Posterior vena cava (tissue), 2 donors: ENCODE measurements at regions of chr5 and their contacts with region 1.

Region 1: DNA sequence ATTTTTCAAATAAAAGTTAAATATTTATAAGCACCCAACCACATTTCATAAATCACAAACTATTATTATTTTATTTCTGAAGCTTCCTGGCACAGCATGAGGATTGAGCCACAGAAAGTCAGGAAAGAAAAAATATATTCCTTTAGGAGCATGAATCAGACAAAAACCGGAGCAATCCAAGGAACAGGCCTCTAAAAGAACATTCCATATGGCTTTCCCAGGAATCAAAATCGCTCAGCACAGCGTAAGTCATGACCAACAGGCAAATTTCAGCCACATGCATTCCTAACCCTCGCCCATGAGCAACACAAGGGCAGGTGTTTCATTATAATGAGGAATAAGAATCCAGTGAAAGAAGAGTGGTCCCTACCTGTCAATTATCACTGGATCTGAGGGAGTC is 26.7 kb downstream of the EBF1 start:
- DNase-seq: no peak

Region 2: DNA sequence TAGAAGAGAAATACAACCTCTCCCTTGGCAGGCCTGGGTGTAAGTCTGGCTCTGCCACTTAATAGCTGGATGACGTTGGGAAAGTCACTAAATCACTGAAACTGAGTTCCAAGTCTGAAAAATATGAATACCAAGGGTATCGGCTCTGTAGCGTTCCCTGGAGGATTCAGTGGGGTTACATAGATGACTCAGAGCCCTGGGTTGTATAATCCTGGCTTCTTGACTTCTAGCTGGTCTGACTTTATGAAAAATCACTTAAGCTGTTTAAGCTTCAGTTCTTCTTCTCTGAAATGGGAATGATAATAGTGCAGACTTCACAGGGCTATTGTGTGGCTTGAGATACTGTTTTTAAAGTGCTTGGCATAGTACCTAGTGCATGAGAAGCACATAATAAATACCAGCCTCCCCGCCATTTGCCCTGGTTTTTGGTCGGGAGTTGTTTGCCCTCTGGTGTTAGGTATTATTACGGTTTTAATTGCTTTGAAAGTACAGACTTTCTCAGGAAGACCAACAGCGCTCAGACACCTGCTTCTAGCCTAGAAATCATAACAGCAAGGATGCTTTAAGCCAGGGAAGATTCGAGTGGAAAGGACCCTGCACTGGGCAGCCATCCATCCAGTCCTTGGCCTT is 1764.1 kb before region 1 on chr5:
- intact Hi-C with region 1: no loop called
- DNase-seq: no peak

Region 3: DNA sequence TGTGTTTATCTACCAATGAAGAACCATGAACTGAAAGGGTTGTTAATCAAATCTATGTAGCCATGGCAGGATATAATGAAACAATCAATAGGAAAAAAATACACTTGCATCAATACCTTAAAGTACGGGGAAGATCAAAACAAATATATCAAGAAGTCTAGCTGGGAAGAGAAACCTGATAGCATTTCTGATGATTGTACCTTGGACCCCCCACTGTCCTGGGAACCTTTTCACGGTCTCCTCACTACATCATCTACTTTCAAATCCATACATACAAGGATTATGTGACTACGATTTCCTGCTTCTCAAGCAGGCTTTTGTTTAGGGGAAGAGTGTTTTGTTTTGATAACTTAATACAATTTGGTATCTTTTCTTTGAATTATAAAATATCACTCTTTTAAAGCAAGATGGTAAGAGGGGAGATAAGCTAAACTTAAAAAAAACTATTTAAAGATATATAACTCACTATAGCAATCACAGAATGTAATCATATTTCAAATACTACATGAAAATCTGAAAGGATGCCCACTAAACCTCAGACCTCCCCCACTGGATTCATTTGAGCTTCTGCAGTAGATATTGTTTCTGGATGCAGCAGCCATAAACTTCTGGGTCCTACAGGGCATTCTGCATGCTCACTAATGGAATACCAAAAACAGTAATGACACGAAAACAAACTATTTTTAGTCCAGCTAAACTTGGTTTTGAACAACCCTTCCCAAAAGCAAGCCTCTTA is 18.7 kb after region 1 on chr5:
- intact Hi-C with region 1: loop called in 1 of 2 experiments (anchors 2 kb)
- DNase-seq: no peak

Region 4: GRCh38 chr5:159163027-159163700 is 90.1 kb after region 1 on chr5:
- intact Hi-C with region 1: no loop called
- DNase-seq: no peak

Region 5: DNA sequence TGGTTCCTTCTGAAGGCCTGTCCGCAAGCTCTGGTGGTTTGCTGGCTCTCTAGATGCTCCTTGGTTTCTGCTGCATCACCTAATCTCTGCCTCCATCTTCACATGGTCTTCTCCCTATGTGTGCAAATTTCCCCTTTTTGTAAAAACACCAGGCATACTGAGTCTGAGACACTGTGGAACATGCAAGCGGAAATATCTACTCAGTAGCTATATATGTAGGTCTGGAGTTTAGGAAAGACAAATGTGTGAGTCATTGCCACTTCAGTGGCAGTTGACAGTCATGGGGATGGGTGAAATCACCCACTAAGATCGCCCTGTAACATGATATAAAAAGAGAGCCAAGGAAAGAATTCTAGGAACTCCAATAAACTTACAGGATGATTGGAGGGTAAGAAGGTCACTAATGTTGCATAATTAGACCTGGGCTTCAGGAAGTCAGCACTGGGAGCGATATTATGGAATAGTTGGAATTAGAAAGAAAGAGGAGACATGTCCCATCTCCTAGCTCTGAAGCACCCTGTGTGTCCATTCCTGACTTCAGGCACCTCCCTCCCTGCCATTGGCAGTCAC is 167.4 kb after region 1 on chr5:
- intact Hi-C with region 1: no loop called
- DNase-seq: no peak

Region 6: GRCh38 chr5:160382346-160382745 is 1309.3 kb after region 1 on chr5:
- intact Hi-C with region 1: loop called in 1 of 2 experiments (anchors 5 kb)
- DNase-seq: no peak